Dorsolateral prefrontal cortex (tissue), 120 donors: ENCODE measurements at regions of chr5 and their contacts with region 1.

Region 1: GRCh38 chr5:147223948-147224791 is 10.7 kb upstream of the STK32A start:
- DNase-seq: peak in 2 of 10 donors; percentile 9 to 42
- H3K4me3 ChIP-seq: no peak overlapping the region
- H3K27ac ChIP-seq: no peak overlapping the region
- H3K27me3 ChIP-seq: peaks cover 0 to 7% (median 0%) of the 10 kb centered on the region in 45 donors
- CTCF ChIP-seq: peak; percentile 21 to 78 (median 56)

Region 2: DNA sequence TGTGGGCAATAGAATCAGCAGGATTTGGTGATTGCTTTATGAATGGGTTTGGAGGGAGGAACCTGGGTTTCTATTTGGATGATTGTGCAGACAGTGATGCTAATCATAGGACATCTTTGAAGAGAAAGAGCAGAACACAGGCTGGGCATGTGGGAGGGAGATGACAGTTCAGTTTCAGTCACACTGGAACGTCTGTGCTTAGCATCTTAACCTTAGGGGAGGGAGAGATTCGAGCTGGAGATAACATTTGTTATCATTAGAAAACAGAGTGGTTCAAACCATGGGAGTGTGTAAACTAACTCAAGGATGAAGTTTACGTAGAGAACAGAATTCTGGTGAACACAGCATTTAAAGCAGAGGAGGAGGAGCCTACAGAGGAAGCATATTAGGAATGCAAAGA is 207.0 kb before region 1 on chr5:
- intact Hi-C with region 1: no loop called
- DNase-seq: peak in 1 of 10 donors; percentile 18
- H3K4me3 ChIP-seq: peak overlapping the region in 27 of 59 donors; percentile 0 to 44 (median 14)
- H3K27ac ChIP-seq: peak overlapping the region in 55 of 59 donors; percentile 3 to 86 (median 58)
- H3K27me3 ChIP-seq: no peaks in the 10 kb centered on the region
- CTCF ChIP-seq: peak in 1 of 56 donors; percentile 5

Region 3: DNA sequence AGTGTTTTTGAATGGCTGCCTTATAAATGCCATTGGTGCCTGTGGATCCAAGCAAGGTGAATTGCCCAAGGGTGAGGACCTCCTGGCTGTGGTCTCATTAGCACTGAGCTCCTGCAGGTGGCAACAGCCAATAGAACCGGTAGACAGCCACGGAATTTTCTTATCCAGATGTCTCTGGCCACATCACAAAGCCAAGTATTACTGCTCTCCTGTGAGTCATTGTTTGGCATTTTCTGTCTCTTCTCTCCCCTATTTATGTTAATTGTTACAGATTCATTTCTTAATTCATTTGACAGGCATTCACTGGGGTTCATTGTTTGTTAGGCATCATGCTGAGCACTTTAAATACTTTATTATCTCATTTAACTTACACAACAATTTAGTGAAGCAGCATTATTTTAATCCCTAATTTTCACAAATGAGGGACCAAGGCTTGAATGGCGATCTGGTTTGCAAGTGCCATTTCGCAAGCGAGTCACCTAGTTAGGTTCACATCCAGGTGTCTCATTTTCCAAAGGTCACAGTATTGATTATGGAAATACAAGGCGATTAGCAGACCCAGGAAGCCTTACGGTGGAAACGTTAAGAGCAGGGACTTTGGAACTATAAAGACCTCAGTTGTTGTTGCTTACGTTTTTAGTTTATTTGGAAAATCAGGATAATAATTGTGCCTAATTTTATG is 343.9 kb after region 1 on chr5:
- intact Hi-C with region 1: loop called (anchors 10 kb)
- DNase-seq: no peak
- H3K4me3 ChIP-seq: no peak overlapping the region
- H3K27ac ChIP-seq: no peak overlapping the region
- H3K27me3 ChIP-seq: no peaks in the 10 kb centered on the region
- CTCF ChIP-seq: no peak

Region 4: GRCh38 chr5:147576646-147577535 is 352.7 kb after region 1 on chr5:
- intact Hi-C with region 1: loop called in 1 of 2 experiments (anchors 10 kb)
- DNase-seq: peak in 9 of 10 donors; percentile 14 to 75 (median 50)
- H3K4me3 ChIP-seq: no peak overlapping the region
- H3K27ac ChIP-seq: no peak overlapping the region
- H3K27me3 ChIP-seq: no peaks in the 10 kb centered on the region
- CTCF ChIP-seq: peak; percentile 52 to 87 (median 81)